Activated CD4-positive, alpha-beta memory T cell treated with anti-CD3 and anti-CD28 coated beads, Interleukin-2, amount 10 ng/mL, durations not matched to agents 7 days and 5 days (primary cell): ENCODE measurements at regions of chr14 and their contacts with region 1.

Region 1: GRCh38 chr14:45134051-45134958 is at the start of gene FKBP3:
- DNase-seq: peak; percentile 96
- H3K4me3 Mint-ChIP-seq: peak within 1 kb of the TSS; percentile 90
- H3K27ac Mint-ChIP-seq: peak within 1 kb of the TSS; percentile 99
- H3K4me1 Mint-ChIP-seq: peaks cover 43% of the 10 kb centered on the region
- H3K27me3 Mint-ChIP-seq: no peaks in the 10 kb centered on the region
- total RNA-seq, gene FKBP3: 54.9 to 57.7 TPM

Region 2: GRCh38 chr14:44897045-44897844 is 237.1 kb before region 1 on chr14:
- CTCF ChIA-PET with region 1: no interaction called
- POLR2A ChIA-PET with region 1: interaction called, 15 read pairs
- DNase-seq: peak; percentile 98
- H3K4me3 Mint-ChIP-seq: peak overlapping the region; percentile 89
- H3K27ac Mint-ChIP-seq: peak overlapping the region; percentile 85
- H3K4me1 Mint-ChIP-seq: peaks cover 20% of the 10 kb centered on the region
- H3K27me3 Mint-ChIP-seq: no peaks in the 10 kb centered on the region

Region 3: DNA sequence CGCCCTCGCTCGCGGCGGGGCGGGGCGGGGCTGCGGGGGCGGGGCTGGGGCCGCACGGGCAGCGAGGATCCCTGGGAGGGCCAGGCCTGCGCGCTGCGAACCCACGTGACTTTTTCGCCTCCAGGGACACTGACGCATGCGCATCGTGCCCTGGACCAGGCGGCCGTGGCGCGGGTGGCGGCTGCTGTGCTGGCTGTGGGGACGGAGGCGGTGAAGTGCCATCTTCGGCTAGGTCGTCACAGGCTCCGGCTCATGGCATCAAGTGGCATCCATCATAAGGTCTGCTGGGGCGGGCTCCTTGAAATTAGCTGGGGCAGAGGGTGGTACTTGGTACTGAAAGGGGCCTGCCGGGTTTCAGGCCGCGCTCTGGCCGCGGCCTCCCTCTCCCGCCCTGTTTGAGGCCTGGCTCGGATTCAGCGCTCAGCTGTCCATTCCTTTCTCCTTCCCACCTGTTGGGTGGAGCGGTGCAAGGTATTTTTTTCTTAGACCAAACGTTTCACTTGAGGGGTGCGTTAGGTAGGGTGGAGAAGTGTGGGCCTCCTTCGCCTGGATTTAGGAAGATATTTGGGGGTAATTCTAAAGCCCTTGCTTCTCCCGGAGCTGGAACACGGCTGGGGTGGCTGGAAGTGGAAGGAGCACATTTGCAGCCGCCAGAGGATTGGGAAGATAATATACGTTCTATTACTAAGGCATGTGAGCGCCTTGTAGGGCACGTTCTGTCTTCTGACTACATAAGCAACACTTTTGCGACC is 50.2 kb before region 1 on chr14 and contains the start of gene PRPF39:
- CTCF ChIA-PET with region 1: interaction called, 3 read pairs
- POLR2A ChIA-PET with region 1: interaction called, 22 read pairs
- DNase-seq: peak; percentile 96
- H3K4me3 Mint-ChIP-seq: peak within 1 kb of the TSS; percentile 95
- H3K27ac Mint-ChIP-seq: peak within 1 kb of the TSS; percentile 89
- H3K4me1 Mint-ChIP-seq: peaks cover 50% of the 10 kb centered on the region
- H3K27me3 Mint-ChIP-seq: no peaks in the 10 kb centered on the region
- total RNA-seq, gene PRPF39: 35.6 to 42.7 TPM

Region 4: DNA sequence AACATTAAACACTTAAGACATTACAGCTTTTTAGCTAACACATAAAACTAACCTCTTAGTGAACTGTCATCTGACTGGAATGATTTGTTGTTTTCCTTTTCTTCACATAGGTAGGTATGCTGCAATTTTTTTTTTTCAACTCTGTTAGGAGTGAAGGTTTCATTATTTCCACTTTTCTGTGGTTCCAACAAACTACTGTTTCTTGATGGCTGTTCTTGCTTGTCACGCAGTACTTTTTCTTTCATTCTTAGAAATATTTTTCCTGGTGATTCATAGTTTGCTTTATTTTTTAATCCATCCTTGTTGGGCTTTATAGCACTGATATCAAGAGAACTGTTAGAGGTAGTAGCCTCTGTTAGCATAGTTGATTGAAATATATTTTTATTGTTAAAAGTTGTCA is 112.4 kb after region 1 on chr14:
- CTCF ChIA-PET with region 1: interaction called, 15 read pairs
- POLR2A ChIA-PET with region 1: interaction called, 53 read pairs
- DNase-seq: no peak
- H3K4me3 Mint-ChIP-seq: no peak overlapping the region
- H3K27ac Mint-ChIP-seq: no peak overlapping the region
- H3K4me1 Mint-ChIP-seq: peaks cover 25% of the 10 kb centered on the region
- H3K27me3 Mint-ChIP-seq: no peaks in the 10 kb centered on the region

Region 5: GRCh38 chr14:45406942-45407341 is 272.6 kb after region 1 on chr14:
- CTCF ChIA-PET with region 1: no interaction called
- POLR2A ChIA-PET with region 1: no interaction called
- DNase-seq: no peak
- H3K4me3 Mint-ChIP-seq: no peak overlapping the region
- H3K27ac Mint-ChIP-seq: no peak overlapping the region
- H3K4me1 Mint-ChIP-seq: no peaks in the 10 kb centered on the region
- H3K27me3 Mint-ChIP-seq: no peaks in the 10 kb centered on the region